ENCODE measurements at regions of chr9 and their contacts with region 1.

Region 1: GRCh38 chr9:129626079-129626624 is at the start of gene NTMT1:
- DNase-seq: peak; percentile 92
- H3K4me3 Mint-ChIP-seq: peak within 1 kb of the TSS; percentile 77
- H3K27ac Mint-ChIP-seq: peak within 1 kb of the TSS; percentile 93
- H3K4me1 Mint-ChIP-seq: peaks cover 59% of the 10 kb centered on the region
- H3K27me3 Mint-ChIP-seq: peaks cover 14% of the 10 kb centered on the region
- total RNA-seq, gene NTMT1: 58.6 to 59.3 TPM

Region 2: DNA sequence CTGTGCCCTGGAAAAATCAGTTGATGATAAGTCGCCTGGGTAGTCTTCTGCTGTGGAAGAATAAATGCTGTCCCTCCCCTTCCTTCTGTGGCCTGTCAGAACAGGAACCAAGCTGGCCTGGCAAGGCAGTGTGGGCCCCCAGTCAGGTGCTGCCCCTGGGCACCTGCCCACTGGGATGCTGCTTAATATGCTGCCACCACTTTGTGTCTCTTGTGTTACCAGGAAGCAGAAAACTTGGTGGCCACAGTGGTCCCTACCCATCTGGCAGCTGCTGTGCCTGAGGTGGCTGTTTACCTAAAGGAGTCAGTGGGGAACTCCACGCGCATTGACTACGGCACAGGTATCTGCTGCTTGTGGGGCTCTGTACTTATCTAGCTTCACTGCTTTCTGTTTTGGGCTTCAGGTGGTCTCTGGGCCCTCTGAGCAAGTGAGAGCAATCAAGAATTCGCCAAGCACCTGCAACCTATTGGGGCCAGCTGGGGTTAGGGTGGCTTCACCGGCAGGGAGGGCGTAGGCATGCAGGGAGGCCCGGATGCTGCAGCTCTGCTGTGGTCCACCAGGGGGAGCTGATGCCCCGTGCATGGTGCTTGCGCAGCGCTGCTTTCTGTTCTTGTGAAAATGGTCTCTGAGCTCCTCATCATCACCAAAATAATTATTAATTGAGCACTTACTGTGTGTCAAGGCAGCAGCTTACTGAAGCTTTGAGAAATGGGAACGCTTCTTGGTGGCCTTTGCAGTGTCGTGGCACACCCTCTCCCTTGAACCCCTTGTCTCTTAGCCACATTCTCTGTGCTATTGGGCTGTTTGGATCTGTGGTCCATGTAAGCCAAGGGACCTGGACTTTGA is 494.6 kb before region 1 on chr9:
- CTCF ChIA-PET with region 1: interaction called, 31 read pairs
- intact Hi-C with region 1: no loop called
- DNase-seq: peak; percentile 90
- H3K4me3 Mint-ChIP-seq: no peak overlapping the region
- H3K27ac Mint-ChIP-seq: peak overlapping the region; percentile 27
- H3K4me1 Mint-ChIP-seq: peaks cover 6% of the 10 kb centered on the region
- H3K27me3 Mint-ChIP-seq: no peaks in the 10 kb centered on the region

Measured in activated naive CD4-positive, alpha-beta T cell treated with anti-CD3 and anti-CD28 coated beads for 36 hours (primary cell).